ENCODE measurements at regions of chr6 and their contacts with region 1.

Region 1: GRCh38 chr6:52419809-52420670 is at the start of gene EFHC1:
- DNase-seq: peak; percentile 96
- CTCF ChIP-seq: no peak

Region 2: DNA sequence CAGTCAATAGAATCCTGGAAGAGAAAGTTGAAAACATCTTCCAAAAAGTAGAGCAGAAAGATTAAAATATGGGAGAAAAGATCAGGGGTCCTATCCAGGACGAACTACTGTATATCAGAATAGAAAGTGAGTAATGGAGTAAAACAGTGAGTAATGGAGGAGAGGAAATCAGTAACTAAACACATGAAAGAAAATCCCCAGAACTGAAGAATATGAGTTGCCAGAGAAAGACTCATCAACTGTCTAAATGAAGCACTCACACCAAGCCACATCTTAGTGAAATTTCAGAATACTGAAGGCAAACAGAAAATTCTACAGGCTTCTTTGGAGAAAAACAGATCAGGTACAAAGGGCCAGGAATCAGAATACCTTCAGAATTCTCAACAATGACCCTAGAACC is 219.0 kb before region 1 on chr6:
- CTCF ChIA-PET with region 1: no interaction called
- POLR2A ChIA-PET with region 1: no interaction called
- DNase-seq: no peak
- CTCF ChIP-seq: no peak

Region 3: GRCh38 chr6:52399511-52400312 is 20.3 kb before region 1 on chr6:
- CTCF ChIA-PET with region 1: interaction called, 39 read pairs
- POLR2A ChIA-PET with region 1: no interaction called
- DNase-seq: peak; percentile 33
- CTCF ChIP-seq: peak; percentile 77

Region 4: DNA sequence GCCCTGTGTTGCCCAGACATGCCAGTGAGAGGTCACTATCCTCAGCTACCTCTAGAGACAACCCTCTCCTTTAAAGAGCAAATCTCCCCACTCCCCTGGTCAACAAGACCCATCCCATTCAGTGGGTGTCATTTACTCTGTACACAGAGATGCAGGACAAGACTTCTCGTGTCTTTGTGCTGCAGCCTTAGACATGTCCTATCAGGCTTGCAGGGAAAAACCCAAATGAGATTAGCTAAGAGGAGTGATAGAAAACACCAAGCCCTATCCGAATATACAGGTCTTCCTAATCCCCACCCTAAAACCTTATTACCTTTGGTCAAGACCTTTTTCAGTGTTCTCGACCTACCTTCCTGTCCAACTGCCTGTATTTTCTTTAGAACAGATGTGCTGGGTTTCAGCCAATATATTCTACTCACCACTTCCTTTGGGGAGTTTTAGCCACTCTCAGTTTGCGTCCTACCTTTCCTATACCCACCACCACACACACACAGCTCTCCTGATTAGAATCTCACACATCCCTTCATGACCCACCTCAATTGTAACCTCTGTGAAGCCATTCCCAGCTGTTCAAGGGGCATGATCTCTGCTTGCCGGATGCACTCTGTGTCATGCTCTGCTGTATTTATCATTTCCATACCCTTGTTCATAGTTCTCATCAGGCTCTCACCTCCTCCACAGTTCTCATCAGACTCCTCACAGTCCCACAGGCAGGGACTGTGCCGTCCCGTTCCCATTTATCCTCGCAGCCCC is 117.1 kb after region 1 on chr6:
- CTCF ChIA-PET with region 1: interaction called, 20 read pairs
- POLR2A ChIA-PET with region 1: no interaction called
- DNase-seq: peak; percentile 38
- CTCF ChIP-seq: no peak

Region 5: DNA sequence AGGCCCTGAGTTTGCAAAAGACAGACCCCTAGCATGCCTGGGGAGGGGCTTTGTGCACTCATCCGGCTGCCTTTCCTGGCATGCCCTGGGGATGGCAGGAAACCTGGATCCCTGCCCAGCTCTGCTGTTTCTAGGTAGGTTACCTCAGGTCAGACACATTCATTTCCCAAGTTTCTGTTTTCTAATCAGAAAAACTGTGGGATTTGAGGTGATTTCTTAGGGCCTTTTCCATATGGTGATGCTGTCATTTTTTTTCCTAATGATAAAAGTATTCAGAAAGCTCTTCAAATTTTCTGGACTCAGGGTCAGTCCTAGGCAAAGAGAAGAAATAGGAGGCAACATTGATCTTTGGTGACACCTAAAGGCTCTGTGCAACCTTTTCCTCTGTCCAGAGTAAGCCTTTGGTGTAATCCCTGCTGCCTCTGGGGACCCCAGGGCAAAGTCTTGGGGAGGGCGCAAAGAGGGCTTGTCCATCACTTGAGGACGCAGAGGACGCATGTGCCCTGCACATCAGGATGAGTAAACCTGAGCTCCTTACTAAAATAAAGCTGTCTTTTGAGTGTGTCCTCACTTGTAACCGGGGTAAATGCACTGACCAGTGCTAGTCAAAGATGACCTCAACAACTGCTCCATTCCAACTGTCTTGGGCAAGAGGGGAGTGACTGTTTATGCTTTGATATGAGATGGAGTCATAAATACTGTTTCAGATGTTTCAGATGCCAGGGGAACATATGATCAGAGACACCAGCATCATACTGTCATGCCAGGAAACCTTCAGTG is 170.3 kb after region 1 on chr6:
- CTCF ChIA-PET with region 1: interaction called, 66 read pairs
- POLR2A ChIA-PET with region 1: no interaction called
- DNase-seq: no peak
- CTCF ChIP-seq: peak; percentile 49

Region 6: DNA sequence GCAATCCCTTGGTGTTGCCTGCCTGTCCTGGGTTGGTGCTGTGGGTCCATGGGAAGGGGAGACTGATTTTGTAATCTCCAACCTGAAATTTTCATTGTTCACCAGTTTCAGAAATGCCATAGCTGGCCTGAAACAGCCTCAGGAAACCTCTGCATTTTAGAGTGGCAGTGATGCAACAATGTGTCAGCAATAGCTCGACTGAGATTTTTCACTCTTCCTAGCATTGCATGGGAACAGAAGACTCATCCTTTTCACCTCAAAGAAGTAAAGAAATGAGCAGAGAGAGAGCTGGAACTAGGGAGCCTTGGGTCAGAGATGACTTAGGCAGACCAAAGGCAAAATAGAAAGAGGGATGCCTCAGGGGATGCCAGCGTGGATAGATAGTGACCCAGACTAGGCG is 227.2 kb after region 1 on chr6:
- CTCF ChIA-PET with region 1: interaction called, 40 read pairs
- POLR2A ChIA-PET with region 1: no interaction called
- DNase-seq: no peak
- CTCF ChIP-seq: no peak